ENCODE measurements at regions of chr15 and their contacts with region 1.

Region 1: DNA sequence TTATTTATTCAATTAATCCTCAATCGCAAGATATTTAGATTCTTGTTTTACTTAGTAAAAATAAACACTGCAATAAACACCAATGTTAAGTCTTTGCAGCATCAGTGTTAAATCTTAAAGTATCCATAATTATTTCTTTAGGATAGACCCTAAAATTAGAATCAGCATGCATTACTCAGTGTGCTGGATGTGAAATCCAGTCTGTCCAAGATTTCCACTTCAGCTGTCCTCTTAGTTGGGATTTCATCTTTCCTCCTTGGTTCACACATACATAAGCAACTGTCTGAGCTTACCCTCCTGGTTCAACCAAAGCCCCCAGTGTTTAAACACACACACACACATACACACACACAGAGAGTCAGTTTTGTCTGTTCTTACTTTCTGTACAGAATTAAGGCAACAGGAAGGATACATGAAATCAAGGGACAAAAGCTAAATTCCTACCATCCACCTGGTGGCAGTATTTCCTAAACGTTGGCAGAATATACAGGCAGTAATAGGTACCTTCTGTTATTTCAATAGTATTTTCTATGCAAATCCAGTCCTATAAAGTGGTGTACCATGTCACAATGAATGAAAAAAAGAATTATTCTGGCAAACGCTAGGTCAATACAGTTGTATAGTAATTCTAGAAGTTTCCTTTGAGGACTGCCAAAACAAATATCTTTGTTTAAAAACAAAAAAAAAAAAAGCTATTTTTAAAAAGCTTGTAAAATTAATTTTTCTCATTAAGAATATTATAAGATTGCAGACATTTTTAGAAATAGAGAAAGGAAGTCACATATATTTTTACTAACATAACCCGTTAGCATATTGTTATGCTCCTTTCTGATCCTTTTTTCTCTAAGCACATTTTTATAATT is 27.3 kb upstream of the DMXL2 start:
- DNase-seq: peak; percentile 71
- ATAC-seq: peak; percentile 98
- H3K4me3 ChIP-seq: no peak overlapping the region
- H3K27ac ChIP-seq: no peak overlapping the region
- H3K4me1 ChIP-seq: peaks cover 3 to 4% of the 10 kb centered on the region in 2 experiments; a peak in 2 of 4 replicates
- H3K27me3 ChIP-seq: no peaks in the 10 kb centered on the region
- CTCF ChIP-seq: peak; percentile 75 to 92 (median 82)
- POLR2A ChIP-seq: no peak
- RAD21 ChIP-seq: peak; percentile 94

Region 2: GRCh38 chr15:51907136-51907914 is 257.4 kb after region 1 on chr15:
- CTCF ChIA-PET with region 1: interaction called, 5 read pairs
- POLR2A ChIA-PET with region 1: no interaction called
- RAD21 ChIA-PET with region 1: no interaction called
- intact Hi-C with region 1: loop called (anchors 5 kb)
- DNase-seq: peak; percentile 96
- ATAC-seq: peak; percentile 98
- H3K4me3 ChIP-seq: no peak overlapping the region
- H3K27ac ChIP-seq: peak overlapping the region; percentile 44
- H3K4me1 ChIP-seq: peaks cover 31 to 32% of the 10 kb centered on the region in 2 experiments
- H3K27me3 ChIP-seq: no peaks in the 10 kb centered on the region
- CTCF ChIP-seq: peak; percentile 50 to 74 (median 66); a peak in 5 of 6 replicates
- POLR2A ChIP-seq: no peak
- RAD21 ChIP-seq: peak; percentile 66

Region 3: GRCh38 chr15:51917493-51917892 is 267.6 kb after region 1 on chr15:
- CTCF ChIA-PET with region 1: interaction called, 15 read pairs
- POLR2A ChIA-PET with region 1: no interaction called
- RAD21 ChIA-PET with region 1: no interaction called
- intact Hi-C with region 1: loop called (anchors 1 kb)
- DNase-seq: peak; percentile 64
- ATAC-seq: peak; percentile 99
- H3K4me3 ChIP-seq: no peak overlapping the region
- H3K27ac ChIP-seq: no peak overlapping the region
- H3K4me1 ChIP-seq: no peaks in the 10 kb centered on the region
- H3K27me3 ChIP-seq: no peaks in the 10 kb centered on the region
- CTCF ChIP-seq: peak; percentile 51 to 66 (median 62); a peak in 5 of 6 replicates
- POLR2A ChIP-seq: no peak
- RAD21 ChIP-seq: peak; percentile 76

Region 4: GRCh38 chr15:52139599-52140491 is 490.0 kb after region 1 on chr15:
- CTCF ChIA-PET with region 1: interaction called, 11 read pairs
- POLR2A ChIA-PET with region 1: no interaction called
- RAD21 ChIA-PET with region 1: no interaction called
- intact Hi-C with region 1: no loop called
- DNase-seq: peak; percentile 48
- ATAC-seq: peak; percentile 86
- H3K4me3 ChIP-seq: no peak overlapping the region
- H3K27ac ChIP-seq: no peak overlapping the region
- H3K4me1 ChIP-seq: peaks cover 0 to 12% of the 10 kb centered on the region in 2 experiments; a peak in 2 of 4 replicates
- H3K27me3 ChIP-seq: no peaks in the 10 kb centered on the region
- CTCF ChIP-seq: peak; percentile 57 to 97 (median 88); a peak in 5 of 6 replicates
- POLR2A ChIP-seq: no peak
- RAD21 ChIP-seq: peak; percentile 78